Posterior vena cava (tissue), 2 donors: ENCODE measurements at regions of chr1 and their contacts with region 1.

Region 1: DNA sequence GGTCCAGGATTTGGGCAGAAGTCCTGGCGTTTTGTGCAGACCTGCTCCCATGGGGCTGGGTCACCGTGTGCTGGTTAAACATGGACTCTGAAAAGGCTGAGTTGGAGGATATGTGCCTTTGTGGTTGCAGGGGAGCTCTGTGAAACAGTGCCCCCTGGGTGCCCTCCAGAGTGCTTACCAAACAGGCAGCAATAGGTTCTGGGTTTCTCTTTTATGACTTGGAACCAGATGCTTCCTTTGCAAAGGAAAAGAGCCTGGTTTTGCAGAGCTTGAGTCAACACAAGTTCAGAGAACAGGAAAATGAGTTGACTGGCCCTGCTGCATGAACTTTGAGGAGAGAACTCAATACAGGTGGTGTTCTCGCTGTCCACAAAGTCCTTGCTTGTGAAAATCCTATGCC is 288.9 kb downstream of the TM2D1 start:
- DNase-seq: no peak

Region 2: DNA sequence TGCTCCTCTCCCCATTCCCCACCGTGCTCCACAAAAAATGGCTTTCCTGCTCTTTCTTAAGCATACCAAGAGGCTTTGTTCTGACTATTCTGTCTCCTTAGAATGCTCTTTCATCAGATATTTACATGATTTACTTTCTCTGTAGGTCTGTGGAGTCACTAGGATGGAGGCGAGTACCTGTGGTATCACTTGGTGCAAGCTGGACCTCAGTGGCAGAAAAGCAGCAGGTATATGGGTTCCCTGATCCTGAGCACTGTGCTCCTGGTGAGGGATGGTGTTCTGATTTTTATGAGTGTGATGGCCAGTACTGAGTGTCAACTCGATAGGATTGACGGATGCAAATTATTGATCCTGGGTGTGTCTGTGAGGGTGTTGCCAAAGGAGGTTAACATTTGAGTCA is 1372.5 kb before region 1 on chr1:
- intact Hi-C with region 1: loop called in 1 of 2 experiments (anchors 5 kb)
- DNase-seq: no peak

Region 3: DNA sequence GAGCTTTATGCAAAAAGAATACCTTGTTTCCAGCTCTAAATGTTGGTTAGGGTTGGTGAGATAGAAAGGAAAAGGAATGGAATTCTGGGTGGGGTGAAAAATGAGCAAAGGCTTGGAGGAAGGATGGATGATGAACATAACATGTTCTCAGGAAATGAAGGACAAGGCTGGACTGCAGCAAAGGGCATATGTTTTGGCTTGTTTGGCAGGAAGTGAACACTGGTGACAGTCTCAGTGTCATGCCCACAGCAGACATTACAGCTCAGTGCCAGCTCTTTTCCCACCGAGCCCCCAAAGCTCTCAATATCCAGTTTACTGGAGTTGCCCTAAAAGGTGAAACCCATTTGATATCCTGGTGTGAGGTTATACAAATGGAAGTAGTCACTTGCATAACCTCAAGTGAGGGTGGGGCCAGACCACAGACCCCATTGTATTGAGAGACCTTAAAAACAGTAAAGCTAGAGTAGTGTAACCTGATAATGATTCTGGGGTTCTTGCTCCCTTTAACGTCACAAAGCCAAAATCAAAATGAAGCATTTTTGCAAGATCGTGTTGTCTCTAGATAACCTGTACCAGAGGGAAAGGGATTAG is 83.1 kb before region 1 on chr1:
- intact Hi-C with region 1: loop called in 1 of 2 experiments (anchors 10 kb)
- DNase-seq: no peak